ENCODE measurements at regions of chr7 and their contacts with region 1.

Region 1: DNA sequence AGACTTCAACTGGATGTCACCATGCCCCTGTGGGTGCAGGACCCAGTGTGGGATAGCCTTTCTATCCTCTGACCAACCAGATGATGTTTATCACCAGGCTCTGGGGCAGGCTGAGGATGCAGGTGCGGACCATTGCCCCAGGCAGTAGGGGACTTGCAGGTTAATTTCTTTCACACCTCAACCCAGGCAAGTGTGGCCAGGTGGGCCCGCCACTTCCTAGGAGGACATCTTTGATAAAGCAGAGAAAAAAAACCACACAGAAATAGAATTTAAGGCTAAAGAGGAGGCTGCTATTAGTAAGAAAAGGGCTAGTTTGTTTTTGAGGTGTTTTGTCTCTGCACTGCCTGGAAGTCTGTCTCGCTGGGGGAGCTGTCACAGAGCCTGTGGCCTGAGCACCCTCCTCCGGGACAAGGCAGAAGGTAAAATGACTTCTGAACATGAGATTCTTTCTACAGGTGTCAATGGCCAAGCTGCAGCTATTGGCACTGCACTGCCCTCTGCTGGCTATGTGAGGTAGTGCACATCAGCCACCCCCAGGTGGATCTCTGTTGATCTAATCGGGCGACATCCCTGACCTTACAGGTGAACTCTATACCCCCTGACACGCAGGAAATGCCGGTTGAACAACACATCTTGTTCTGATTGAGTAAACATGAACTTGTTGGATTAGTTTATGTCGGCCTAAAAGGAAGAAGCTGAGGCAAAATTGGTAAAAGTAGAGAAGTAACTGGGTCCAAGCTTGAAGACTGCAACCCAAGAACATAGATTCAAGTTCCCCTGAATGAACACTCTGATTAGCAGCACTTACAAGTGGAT is 21.0 kb downstream of the UPP1 start:
- DNase-seq: peak; percentile 82 to 93
- ATAC-seq: peak; percentile 92 to 96 (median 92)
- H3K4me3 ChIP-seq: no peak overlapping the region
- H3K4me3 Mint-ChIP-seq: no peak overlapping the region
- H3K27ac ChIP-seq: peak overlapping the region; percentile 24
- H3K27ac Mint-ChIP-seq: peak overlapping the region; percentile 64 to 85
- H3K4me1 ChIP-seq: peaks cover 15% of the 10 kb centered on the region
- H3K4me1 Mint-ChIP-seq: peaks cover 14 to 22% of the 10 kb centered on the region in 2 donors
- H3K27me3 ChIP-seq: no peaks in the 10 kb centered on the region
- H3K27me3 Mint-ChIP-seq: no peaks in the 10 kb centered on the region
- CTCF ChIP-seq: peak; percentile 99

Region 2: GRCh38 chr7:47901542-47901941 is 208.5 kb before region 1 on chr7:
- intact Hi-C with region 1: no loop called
- DNase-seq: no peak
- ATAC-seq: no peak
- H3K4me3 ChIP-seq: no peak overlapping the region
- H3K4me3 Mint-ChIP-seq: no peak overlapping the region
- H3K27ac ChIP-seq: no peak overlapping the region
- H3K27ac Mint-ChIP-seq: no peak overlapping the region
- H3K4me1 ChIP-seq: no peaks in the 10 kb centered on the region
- H3K4me1 Mint-ChIP-seq: no peaks in the 10 kb centered on the region
- H3K27me3 ChIP-seq: no peaks in the 10 kb centered on the region
- H3K27me3 Mint-ChIP-seq: peaks cover 2 to 7% of the 10 kb centered on the region in 2 donors
- CTCF ChIP-seq: no peak

Region 3: GRCh38 chr7:47945261-47946001 is 164.6 kb before region 1 on chr7:
- intact Hi-C with region 1: loop called (anchors 1 kb)
- DNase-seq: peak; percentile 65 to 81
- ATAC-seq: peak in 2 of 3 donors; percentile 29 to 66
- H3K4me3 ChIP-seq: no peak overlapping the region
- H3K4me3 Mint-ChIP-seq: no peak overlapping the region
- H3K27ac ChIP-seq: no peak overlapping the region
- H3K27ac Mint-ChIP-seq: no peak overlapping the region
- H3K4me1 ChIP-seq: no peaks in the 10 kb centered on the region
- H3K4me1 Mint-ChIP-seq: no peaks in the 10 kb centered on the region
- H3K27me3 ChIP-seq: no peaks in the 10 kb centered on the region
- H3K27me3 Mint-ChIP-seq: no peaks in the 10 kb centered on the region
- CTCF ChIP-seq: peak; percentile 89

Region 4: GRCh38 chr7:47991741-47992311 is 118.2 kb before region 1 on chr7:
- intact Hi-C with region 1: loop called (anchors 1 kb)
- DNase-seq: peak; percentile 77 to 89
- ATAC-seq: peak; percentile 98 to 99 (median 99)
- H3K4me3 ChIP-seq: peak overlapping the region; percentile 54
- H3K4me3 Mint-ChIP-seq: peak overlapping the region; percentile 98
- H3K27ac ChIP-seq: peak overlapping the region; percentile 72
- H3K27ac Mint-ChIP-seq: peak overlapping the region; percentile 95 to 97
- H3K4me1 ChIP-seq: peaks cover 13% of the 10 kb centered on the region
- H3K4me1 Mint-ChIP-seq: peaks cover 16 to 27% of the 10 kb centered on the region in 2 donors
- H3K27me3 ChIP-seq: no peaks in the 10 kb centered on the region
- H3K27me3 Mint-ChIP-seq: no peaks in the 10 kb centered on the region
- CTCF ChIP-seq: peak; percentile 69

Region 5: DNA sequence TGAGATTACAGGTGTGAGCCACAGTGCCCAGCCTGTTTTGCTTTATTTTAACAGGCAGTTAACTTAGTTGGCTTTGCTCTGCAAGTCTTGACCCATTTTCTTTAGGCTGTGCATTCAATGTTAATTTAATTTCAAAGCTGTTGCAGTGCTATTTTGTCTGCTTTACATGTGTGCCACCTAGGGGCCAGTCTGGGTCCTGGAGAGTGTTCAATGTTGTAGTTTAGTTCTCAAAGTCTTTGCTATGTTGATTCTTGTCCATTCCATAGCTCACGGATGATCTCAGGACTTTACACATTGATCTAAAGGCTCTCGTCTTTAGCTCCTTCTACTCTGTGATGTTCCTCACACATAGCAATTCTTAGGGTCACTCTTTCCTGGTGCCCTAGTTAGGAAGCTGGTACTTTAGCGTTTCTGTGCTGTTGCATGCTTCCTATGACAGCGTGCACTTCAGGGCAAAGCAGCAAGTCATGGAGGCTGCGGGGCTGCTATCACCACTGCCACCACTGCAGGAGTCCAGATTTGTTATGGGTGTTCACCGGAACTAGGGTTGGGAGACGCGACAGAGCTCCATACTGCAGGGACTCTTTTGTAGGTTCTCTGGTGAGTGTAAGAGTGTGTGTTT is 44.8 kb after region 1 on chr7:
- intact Hi-C with region 1: loop called (anchors 2 kb)
- DNase-seq: peak; percentile 21 to 56
- ATAC-seq: peak; percentile 56 to 78 (median 58)
- H3K4me3 ChIP-seq: no peak overlapping the region
- H3K4me3 Mint-ChIP-seq: no peak overlapping the region
- H3K27ac ChIP-seq: no peak overlapping the region
- H3K27ac Mint-ChIP-seq: no peak overlapping the region
- H3K4me1 ChIP-seq: no peaks in the 10 kb centered on the region
- H3K4me1 Mint-ChIP-seq: no peaks in the 10 kb centered on the region
- H3K27me3 ChIP-seq: no peaks in the 10 kb centered on the region
- H3K27me3 Mint-ChIP-seq: peaks cover 16 to 22% of the 10 kb centered on the region in 2 donors
- CTCF ChIP-seq: peak; percentile 69

Region 6: GRCh38 chr7:48295296-48295971 is 185.4 kb after region 1 on chr7:
- intact Hi-C with region 1: no loop called
- DNase-seq: no peak
- ATAC-seq: no peak
- H3K4me3 ChIP-seq: no peak overlapping the region
- H3K4me3 Mint-ChIP-seq: no peak overlapping the region
- H3K27ac ChIP-seq: no peak overlapping the region
- H3K27ac Mint-ChIP-seq: no peak overlapping the region
- H3K4me1 ChIP-seq: no peaks in the 10 kb centered on the region
- H3K4me1 Mint-ChIP-seq: peaks cover 0 to 15% of the 10 kb centered on the region in 2 donors
- H3K27me3 ChIP-seq: no peaks in the 10 kb centered on the region
- H3K27me3 Mint-ChIP-seq: peaks cover 0 to 9% of the 10 kb centered on the region in 2 donors
- CTCF ChIP-seq: no peak

Measured in natural killer cell (primary cell).